ENCODE measurements at regions of chr1 and their contacts with region 1.

Region 1: DNA sequence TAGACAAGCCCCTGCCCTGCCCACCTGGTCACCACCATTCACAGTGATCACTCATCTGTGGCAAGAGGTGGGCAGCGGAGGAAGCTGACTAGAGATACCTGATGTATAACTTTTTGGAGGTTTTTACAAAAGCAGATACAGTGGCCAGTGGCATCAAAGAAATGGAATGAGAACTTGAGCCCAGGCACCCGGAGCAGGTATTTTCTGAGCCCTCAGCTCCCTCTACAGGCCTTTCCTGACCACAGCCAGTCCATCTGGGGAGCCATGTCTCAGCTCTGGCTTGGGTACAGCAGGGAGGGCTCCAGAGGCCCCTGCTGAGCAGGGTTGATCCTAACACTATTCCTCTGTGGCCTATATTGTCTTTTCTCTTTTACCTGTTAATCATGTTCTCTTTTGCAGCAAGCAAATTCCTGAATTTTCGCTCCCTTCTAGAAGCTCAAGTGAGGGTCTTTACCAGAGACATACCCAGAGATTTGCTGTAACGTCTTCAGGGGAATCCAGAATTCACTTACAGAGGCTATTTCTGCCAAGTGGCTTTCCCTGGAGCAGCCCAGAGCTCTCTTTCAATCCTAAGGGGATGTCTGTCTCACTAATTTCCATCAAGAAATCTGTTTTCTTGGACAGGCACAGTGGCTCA is 27.3 kb downstream of the GPR157 start:
- DNase-seq: peak; percentile 51 to 58
- ATAC-seq: peak; percentile 95 to 96
- H3K4me3 ChIP-seq: no peak overlapping the region
- H3K27ac ChIP-seq: no peak overlapping the region
- H3K4me1 ChIP-seq: no peaks in the 10 kb centered on the region
- CTCF ChIP-seq: peak; percentile 59
- EP300 ChIP-seq: no peak
- POLR2A ChIP-seq: no peak
- RAD21 ChIP-seq: peak; percentile 67 to 70

Region 2: DNA sequence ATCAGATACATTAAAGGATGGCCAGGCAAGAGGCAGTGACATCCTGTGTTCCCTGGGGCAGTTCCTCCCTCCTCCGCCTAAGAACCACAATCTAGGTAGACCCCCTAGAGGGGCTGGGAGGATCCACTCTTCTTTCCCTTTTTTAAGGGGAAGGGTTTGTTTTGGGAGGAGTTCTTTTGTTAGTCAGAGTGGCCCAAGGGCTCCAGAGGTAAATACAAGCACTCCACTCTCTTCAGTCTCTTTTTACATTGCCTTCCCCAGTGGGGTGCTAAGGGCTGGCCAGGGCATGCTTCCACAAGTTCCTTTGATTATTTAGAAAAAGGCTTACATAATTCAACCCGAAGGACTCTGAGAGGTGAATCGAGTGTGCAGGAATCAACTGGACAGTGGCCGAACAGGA is 190.2 kb before region 1 on chr1:
- CTCF ChIA-PET with region 1: interaction called, 23 read pairs
- POLR2A ChIA-PET with region 1: no interaction called
- DNase-seq: peak in 1 of 2 experiments; percentile 44
- ATAC-seq: peak; percentile 28 to 32; a peak in 3 of 6 replicates
- H3K4me3 ChIP-seq: no peak overlapping the region
- H3K27ac ChIP-seq: no peak overlapping the region; a peak in 2 of 6 replicates
- H3K4me1 ChIP-seq: peaks cover 61% of the 10 kb centered on the region
- CTCF ChIP-seq: no peak
- EP300 ChIP-seq: no peak
- POLR2A ChIP-seq: no peak
- RAD21 ChIP-seq: no peak

Region 3: DNA sequence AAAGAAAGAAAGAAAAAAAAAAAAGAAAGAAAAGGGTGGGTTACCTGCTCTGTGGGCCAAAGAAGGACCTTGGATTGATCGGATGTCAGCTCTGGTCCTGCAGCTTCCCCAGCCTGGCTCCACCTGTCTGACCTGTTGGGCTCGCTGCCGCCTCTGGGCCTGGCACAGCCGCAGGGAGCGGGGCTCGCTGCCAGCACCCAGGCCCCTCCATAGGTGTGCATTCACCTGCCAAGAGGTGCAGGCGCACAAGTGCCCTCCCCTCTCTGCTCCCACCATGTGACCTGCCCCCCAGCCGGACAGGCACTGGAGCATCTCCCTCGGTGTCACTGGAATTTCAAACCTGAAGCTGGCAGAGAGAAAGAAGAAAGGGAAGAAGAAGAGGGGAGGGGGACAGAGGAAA is 60.3 kb after region 1 on chr1:
- CTCF ChIA-PET with region 1: no interaction called
- POLR2A ChIA-PET with region 1: no interaction called
- DNase-seq: no peak
- ATAC-seq: no peak
- H3K4me3 ChIP-seq: no peak overlapping the region
- H3K27ac ChIP-seq: peak overlapping the region; percentile 96 to 97; a peak in 5 of 6 replicates
- H3K4me1 ChIP-seq: peaks cover 53% of the 10 kb centered on the region
- CTCF ChIP-seq: no peak
- EP300 ChIP-seq: no peak
- POLR2A ChIP-seq: no peak
- RAD21 ChIP-seq: no peak